ENCODE measurements at regions of chr7 and their contacts with region 1.

Region 1: GRCh38 chr7:158976849-158977593 is 120.7 kb downstream of the DYNC2I1 start:
- DNase-seq: peak; percentile 86
- CTCF ChIP-seq: peak; percentile 90

Region 2: DNA sequence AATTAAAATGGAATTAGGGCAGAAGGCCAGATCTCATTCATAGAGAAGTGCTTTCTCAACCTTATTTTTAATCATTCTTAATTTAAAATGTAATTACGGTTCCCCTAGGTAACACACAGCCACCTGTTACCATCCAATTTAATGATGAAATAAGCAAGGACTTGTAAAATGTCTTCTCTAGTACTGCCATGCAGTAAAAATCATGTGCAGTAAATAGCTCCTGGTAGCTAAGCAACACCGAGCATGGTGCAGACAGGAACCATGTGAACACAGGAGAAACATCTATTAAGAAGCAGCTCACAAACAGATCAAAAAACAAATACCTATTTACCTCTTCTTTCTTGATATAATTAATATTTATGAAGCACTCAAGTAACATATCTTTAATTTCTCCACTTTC is 287.5 kb before region 1 on chr7:
- CTCF ChIA-PET with region 1: interaction called, 124 read pairs
- POLR2A ChIA-PET with region 1: no interaction called
- DNase-seq: no peak
- CTCF ChIP-seq: no peak

Region 3: GRCh38 chr7:158704704-158705468 is 272.1 kb before region 1 on chr7 and contains the start of gene NCAPG2:
- CTCF ChIA-PET with region 1: interaction called, 124 read pairs
- POLR2A ChIA-PET with region 1: no interaction called
- DNase-seq: peak; percentile 99
- CTCF ChIP-seq: peak; percentile 3

Region 4: DNA sequence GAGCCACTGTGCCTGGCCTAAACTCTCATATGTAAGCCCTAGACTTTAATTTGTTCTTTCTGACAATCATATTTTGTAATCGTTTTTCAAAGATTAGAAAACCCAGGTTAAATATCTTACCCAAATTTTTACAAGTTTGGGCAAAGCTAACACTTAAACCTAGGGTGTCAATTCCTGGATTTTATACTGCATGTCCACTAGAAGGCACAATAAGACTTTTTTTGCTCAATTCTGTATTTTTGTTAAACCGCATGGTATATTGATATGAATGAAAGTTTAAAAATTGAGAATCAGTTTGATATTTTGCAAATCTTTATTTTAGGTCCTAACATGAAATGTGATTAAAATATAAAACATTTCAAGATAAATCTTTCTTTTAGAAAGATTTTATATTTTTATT is 91.4 kb before region 1 on chr7:
- CTCF ChIA-PET with region 1: interaction called, 23 read pairs
- POLR2A ChIA-PET with region 1: interaction called, 3 read pairs
- DNase-seq: no peak
- CTCF ChIP-seq: no peak

Region 5: GRCh38 chr7:158955146-158955870 is 21.7 kb before region 1 on chr7:
- CTCF ChIA-PET with region 1: interaction called, 16 read pairs
- POLR2A ChIA-PET with region 1: no interaction called
- DNase-seq: no peak
- CTCF ChIP-seq: no peak

Region 6: GRCh38 chr7:158991824-158992583 is 15.0 kb after region 1 on chr7:
- CTCF ChIA-PET with region 1: interaction called, 20 read pairs
- POLR2A ChIA-PET with region 1: no interaction called
- DNase-seq: no peak
- CTCF ChIP-seq: no peak

Measured in GM10248 (cell line).